ENCODE measurements at regions of chr21 and their contacts with region 1.

Region 1: DNA sequence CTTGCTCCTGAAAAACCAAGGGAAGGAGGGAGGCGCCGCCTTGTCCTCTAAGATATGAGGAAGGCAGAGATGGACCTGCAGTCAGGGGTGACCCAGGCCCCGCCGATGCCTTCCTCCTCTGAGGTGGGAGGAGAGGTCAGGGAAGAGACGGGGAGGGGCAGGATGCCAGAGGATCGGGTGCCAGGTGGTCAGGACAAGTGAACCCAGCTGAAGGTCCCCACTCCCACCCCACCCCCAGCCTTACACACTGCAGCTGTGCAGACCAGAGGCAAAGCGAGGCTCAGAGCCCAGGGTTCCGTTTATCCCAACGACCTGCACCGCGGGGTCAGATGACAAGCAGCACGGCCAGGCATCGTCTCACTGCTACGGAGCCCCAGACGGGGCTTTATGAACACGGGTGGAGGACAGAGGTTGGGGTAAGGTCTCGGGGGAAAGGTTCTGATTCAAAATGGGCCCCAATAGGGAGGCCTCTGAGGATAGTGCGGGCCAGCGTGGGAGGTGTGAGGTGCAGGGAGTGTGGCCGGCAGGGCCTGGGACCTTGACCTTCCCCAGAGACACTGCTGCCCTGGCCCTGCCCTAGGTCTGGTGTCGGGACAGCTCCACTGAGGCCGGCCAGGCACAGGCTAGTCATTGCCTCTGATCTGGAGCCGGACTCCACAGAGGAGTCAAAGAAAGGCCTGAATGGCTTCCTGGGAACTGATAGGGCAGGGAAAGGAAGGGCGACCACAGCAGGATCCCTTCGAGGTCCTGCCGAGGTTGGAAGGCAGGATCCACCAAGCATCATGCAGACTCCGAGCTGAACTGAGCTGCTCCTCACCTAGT is 112.4 kb downstream of the WDR4 start:
- DNase-seq: no peak
- H3K4me3 ChIP-seq: no peak overlapping the region
- H3K4me3 Mint-ChIP-seq: no peak overlapping the region
- H3K27ac ChIP-seq: no peak overlapping the region
- H3K27ac Mint-ChIP-seq: no peak overlapping the region
- H3K4me1 ChIP-seq: peaks cover 11 to 15% of the 10 kb centered on the region in 2 donors
- H3K4me1 Mint-ChIP-seq: peaks cover 16% of the 10 kb centered on the region
- H3K27me3 ChIP-seq: no peaks in the 10 kb centered on the region
- H3K27me3 Mint-ChIP-seq: peaks cover 0 to 7% (median 3%) of the 10 kb centered on the region in 3 donors
- CTCF ChIP-seq: no peak

Region 2: DNA sequence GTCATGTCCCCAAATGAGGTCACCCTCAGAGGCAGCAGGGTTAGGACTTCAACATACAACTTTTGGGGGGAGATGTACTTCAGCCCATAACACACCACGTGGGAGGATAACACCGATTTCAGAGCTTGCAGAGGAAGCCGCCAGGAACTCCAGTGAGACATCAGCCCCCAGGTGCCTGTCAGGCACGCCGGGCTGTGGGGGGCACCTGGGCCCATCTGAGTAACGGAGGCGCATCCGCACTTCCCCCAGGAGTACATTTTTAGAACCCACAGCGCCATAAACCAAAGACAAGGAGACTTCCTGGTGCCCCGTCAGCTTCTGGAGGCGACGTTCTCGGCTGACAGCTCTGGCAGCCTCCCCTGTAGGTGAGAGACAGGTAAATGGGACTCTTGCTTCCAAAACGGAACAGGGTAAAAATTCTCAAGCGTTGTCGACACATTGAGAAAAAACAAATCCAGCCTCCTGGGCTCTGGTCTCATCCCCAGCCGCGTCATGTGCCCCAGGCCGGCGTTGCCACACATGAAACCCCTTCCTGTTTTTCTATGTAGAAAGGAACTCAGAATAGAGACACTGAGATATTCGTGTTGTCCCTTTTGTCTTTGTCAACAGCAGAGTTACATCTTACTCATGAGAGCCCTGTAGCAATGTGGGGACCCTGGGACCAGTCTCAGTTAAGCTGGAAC is 20.2 kb before region 1 on chr21:
- intact Hi-C with region 1: loop called in 1 of 2 experiments (anchors 2 kb)
- DNase-seq: peak; percentile 89 to 98 (median 94)
- H3K4me3 ChIP-seq: peak overlapping the region in 1 of 3 experiments; percentile 46
- H3K4me3 Mint-ChIP-seq: peak overlapping the region; percentile 53 to 78
- H3K27ac ChIP-seq: peak overlapping the region; percentile 93 to 99
- H3K27ac Mint-ChIP-seq: peak overlapping the region; percentile 97 to 98 (median 98)
- H3K4me1 ChIP-seq: peaks cover 30 to 43% of the 10 kb centered on the region in 2 donors
- H3K4me1 Mint-ChIP-seq: peaks cover 33% of the 10 kb centered on the region
- H3K27me3 ChIP-seq: no peaks in the 10 kb centered on the region
- H3K27me3 Mint-ChIP-seq: peaks cover 0 to 7% (median 1%) of the 10 kb centered on the region in 3 donors
- CTCF ChIP-seq: no peak

Region 3: GRCh38 chr21:42850866-42851391 is 84.0 kb after region 1 on chr21:
- intact Hi-C with region 1: no loop called
- DNase-seq: peak in 1 of 3 donors; percentile 2
- H3K4me3 ChIP-seq: no peak overlapping the region
- H3K4me3 Mint-ChIP-seq: no peak overlapping the region
- H3K27ac ChIP-seq: no peak overlapping the region
- H3K27ac Mint-ChIP-seq: peak overlapping the region in 1 of 7 donors; percentile 10
- H3K4me1 ChIP-seq: no peaks in the 10 kb centered on the region
- H3K4me1 Mint-ChIP-seq: no peaks in the 10 kb centered on the region
- H3K27me3 ChIP-seq: no peaks in the 10 kb centered on the region
- H3K27me3 Mint-ChIP-seq: peaks cover 0 to 3% (median 0%) of the 10 kb centered on the region in 3 donors
- CTCF ChIP-seq: peak; percentile 56

Region 4: GRCh38 chr21:42923541-42924432 is 156.8 kb after region 1 on chr21:
- intact Hi-C with region 1: no loop called
- DNase-seq: peak; percentile 40 to 63 (median 62)
- H3K4me3 ChIP-seq: no peak overlapping the region
- H3K4me3 Mint-ChIP-seq: peak overlapping the region; percentile 47 to 74
- H3K27ac ChIP-seq: no peak overlapping the region
- H3K27ac Mint-ChIP-seq: peak overlapping the region in 1 of 7 donors; percentile 4
- H3K4me1 ChIP-seq: peaks cover 7 to 9% of the 10 kb centered on the region in 2 donors
- H3K4me1 Mint-ChIP-seq: peaks cover 13% of the 10 kb centered on the region
- H3K27me3 ChIP-seq: no peaks in the 10 kb centered on the region
- H3K27me3 Mint-ChIP-seq: no peaks in the 10 kb centered on the region
- CTCF ChIP-seq: peak; percentile 70

Measured in CD14-positive monocyte (primary cell).